MCF 10A (cell line): ENCODE measurements at regions of chr4 and their contacts with region 1.

Region 1: DNA sequence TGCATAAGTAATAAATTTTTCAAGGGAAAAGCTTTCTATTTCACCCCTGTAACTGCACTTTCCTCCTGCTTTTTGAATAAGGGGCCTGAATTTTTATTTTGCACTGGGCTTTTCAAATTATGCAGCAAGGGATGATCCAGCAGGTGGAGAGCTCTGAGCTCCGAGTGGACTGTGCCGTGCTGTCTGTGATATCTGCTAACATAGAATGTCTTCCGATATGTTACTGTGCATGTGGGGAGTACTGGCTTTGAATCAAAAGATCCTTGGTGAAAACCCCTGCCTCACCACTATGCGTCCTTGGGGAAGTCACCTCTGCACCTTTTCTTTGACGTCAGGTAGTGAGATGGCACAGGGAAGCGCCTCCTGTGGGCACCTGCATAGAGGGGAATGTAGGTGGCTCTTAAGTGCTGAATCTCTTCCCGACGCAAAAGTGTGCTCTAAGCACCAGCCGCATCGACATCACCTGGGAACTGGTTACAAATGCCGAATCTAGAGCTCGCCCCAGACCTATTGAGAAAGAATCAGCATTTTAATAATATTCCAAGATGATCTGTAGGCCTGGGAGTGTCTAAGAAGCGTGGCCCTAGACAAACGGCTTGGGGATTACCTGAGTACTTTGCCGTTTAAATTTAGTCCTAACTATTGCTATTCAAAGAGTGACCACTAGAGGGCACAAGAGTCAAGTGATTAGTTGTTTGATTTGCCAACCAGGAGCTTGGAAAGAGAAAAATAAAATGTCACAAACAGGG is 19.2 kb upstream of the WFS1 start:
- DNase-seq: peak; percentile 74
- H3K4me3 Mint-ChIP-seq: no peak overlapping the region
- H3K27ac Mint-ChIP-seq: no peak overlapping the region
- H3K4me1 Mint-ChIP-seq: no peaks in the 10 kb centered on the region
- H3K27me3 Mint-ChIP-seq: peaks cover 18% of the 10 kb centered on the region
- CTCF ChIP-seq: peak; percentile 75

Region 2: DNA sequence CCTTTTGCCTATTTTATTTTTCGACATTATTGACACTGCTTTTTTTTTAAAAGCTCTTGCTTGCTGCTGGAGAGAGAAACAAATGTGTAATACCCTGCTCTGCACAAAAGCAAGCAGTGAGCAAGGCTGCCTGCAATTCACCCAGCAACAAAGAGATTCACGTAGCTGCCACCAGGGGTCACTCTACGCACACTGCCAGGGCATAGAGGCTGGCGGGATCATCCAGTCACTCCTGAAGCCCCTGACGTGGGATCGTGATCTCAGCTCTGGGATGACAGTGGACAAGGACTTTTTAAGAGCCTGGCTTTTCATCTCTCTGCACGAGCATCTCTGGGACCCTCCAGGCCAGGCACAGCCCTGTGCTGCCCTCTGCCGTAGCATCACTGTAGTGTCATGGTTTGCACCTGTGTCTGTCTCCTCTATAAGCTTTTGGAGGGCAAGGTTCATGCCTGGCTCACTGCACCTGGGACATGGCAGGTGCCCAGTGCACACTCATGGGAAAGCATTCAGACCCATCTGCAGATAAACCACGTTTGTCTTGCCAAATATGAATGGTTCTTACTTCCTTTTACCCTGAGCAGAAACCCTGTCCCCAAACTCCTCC is 252.0 kb before region 1 on chr4:
- CTCF ChIA-PET with region 1: interaction called, 35 read pairs
- POLR2A ChIA-PET with region 1: no interaction called
- intact Hi-C with region 1: no loop called
- DNase-seq: peak; percentile 70
- H3K4me3 Mint-ChIP-seq: no peak overlapping the region
- H3K27ac Mint-ChIP-seq: no peak overlapping the region
- H3K4me1 Mint-ChIP-seq: no peaks in the 10 kb centered on the region
- H3K27me3 Mint-ChIP-seq: no peaks in the 10 kb centered on the region
- CTCF ChIP-seq: peak; percentile 51

Region 3: DNA sequence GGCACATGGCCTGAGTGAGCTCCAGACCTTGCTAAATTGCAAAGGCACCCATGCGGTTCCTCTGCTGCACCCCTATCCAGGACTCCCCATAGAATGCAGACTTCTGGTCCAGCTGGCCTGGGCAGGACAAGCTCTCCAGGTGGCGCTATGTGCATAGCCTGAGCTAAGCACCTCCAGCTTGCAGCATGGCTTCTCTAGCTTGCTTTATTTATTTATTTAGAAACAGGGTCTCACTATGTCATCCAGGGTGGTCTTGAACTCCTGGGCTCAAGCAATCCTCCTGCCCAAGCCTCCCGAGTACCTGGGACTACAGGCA is 13.8 kb after region 1 on chr4:
- CTCF ChIA-PET with region 1: interaction called, 42 read pairs
- POLR2A ChIA-PET with region 1: interaction called, 4 read pairs
- intact Hi-C with region 1: no loop called
- DNase-seq: peak; percentile 47
- H3K4me3 Mint-ChIP-seq: no peak overlapping the region
- H3K27ac Mint-ChIP-seq: no peak overlapping the region
- H3K4me1 Mint-ChIP-seq: peaks cover 22% of the 10 kb centered on the region
- H3K27me3 Mint-ChIP-seq: peaks cover 17% of the 10 kb centered on the region
- CTCF ChIP-seq: peak; percentile 31

Region 4: GRCh38 chr4:6281423-6282313 is 31.3 kb after region 1 on chr4:
- CTCF ChIA-PET with region 1: interaction called, 12 read pairs
- POLR2A ChIA-PET with region 1: no interaction called
- intact Hi-C with region 1: no loop called
- DNase-seq: no peak
- H3K4me3 Mint-ChIP-seq: no peak overlapping the region
- H3K27ac Mint-ChIP-seq: peak overlapping the region; percentile 54
- H3K4me1 Mint-ChIP-seq: no peaks in the 10 kb centered on the region
- H3K27me3 Mint-ChIP-seq: no peaks in the 10 kb centered on the region
- CTCF ChIP-seq: no peak

Region 5: DNA sequence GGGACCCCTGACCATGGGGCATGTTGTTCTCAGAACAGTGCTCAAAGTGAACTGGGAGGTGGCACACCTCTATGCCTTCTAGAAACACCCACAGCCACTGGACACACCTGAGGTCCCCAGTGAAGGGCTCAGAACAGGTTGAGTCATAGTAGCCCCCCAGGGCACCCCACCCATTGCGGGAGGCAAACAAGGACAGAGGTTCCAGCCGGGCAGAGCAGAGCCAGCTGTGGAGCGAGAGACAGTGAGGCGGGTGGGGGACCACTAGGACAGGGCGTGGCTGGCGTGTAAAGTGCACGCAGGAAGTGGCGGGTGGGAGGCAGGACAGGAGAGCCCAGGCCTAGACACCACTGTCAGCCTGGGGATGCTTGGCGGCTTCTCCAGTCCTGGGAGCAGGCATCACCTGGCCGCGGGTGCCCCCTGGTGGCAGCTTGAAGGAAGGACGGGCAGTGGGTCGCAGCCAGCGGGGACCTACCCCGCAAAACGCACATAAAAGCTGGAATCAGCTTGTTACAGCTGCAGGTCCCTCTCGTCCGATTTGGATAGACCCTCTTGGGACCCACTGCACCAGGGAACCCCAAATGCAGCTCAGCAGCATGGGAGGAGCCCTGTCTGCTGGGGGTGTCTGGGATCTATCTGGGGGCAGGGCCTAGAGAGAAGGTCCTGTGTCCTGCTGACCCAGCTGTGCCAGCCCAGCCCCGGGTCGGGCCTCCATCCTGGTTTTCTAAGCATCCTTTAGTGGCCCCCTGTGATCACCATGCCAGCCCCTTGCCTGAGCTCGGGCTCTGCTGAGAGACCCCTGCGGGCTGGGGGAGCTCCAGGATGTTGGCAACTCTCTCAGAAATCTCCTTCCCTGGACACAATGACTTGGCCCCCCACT is 76.9 kb after region 1 on chr4:
- CTCF ChIA-PET with region 1: interaction called, 522 read pairs
- POLR2A ChIA-PET with region 1: interaction called, 4 read pairs
- intact Hi-C with region 1: loop called (anchors 1 kb)
- DNase-seq: peak; percentile 74
- H3K4me3 Mint-ChIP-seq: no peak overlapping the region
- H3K27ac Mint-ChIP-seq: no peak overlapping the region
- H3K4me1 Mint-ChIP-seq: no peaks in the 10 kb centered on the region
- H3K27me3 Mint-ChIP-seq: no peaks in the 10 kb centered on the region
- CTCF ChIP-seq: peak; percentile 97

Region 6: GRCh38 chr4:6546681-6547447 is 296.5 kb after region 1 on chr4:
- CTCF ChIA-PET with region 1: interaction called, 23 read pairs
- POLR2A ChIA-PET with region 1: no interaction called
- intact Hi-C with region 1: loop called (anchors 1 kb)
- DNase-seq: peak; percentile 75
- H3K4me3 Mint-ChIP-seq: no peak overlapping the region
- H3K27ac Mint-ChIP-seq: no peak overlapping the region
- H3K4me1 Mint-ChIP-seq: no peaks in the 10 kb centered on the region
- H3K27me3 Mint-ChIP-seq: peaks cover 29% of the 10 kb centered on the region
- CTCF ChIP-seq: peak; percentile 95